HCT116 (cell line): ENCODE measurements at regions of chr11 and their contacts with region 1.

Region 1: GRCh38 chr11:57644748-57645688 is 4.7 kb downstream of the YPEL4 start:
- DNase-seq: peak; percentile 71
- ATAC-seq: peak; percentile 88
- H3K4me3 ChIP-seq: no peak overlapping the region
- H3K27ac ChIP-seq: no peak overlapping the region
- H3K4me1 ChIP-seq: peaks cover 0 to 22% of the 10 kb centered on the region in 2 experiments; a peak in 3 of 4 replicates
- H3K27me3 ChIP-seq: peaks cover 12% of the 10 kb centered on the region; the same call in 1 of the 2 replicates
- CTCF ChIP-seq: peak; percentile 77 to 96 (median 90)
- POLR2A ChIP-seq: no peak
- RAD21 ChIP-seq: peak; percentile 79

Region 2: DNA sequence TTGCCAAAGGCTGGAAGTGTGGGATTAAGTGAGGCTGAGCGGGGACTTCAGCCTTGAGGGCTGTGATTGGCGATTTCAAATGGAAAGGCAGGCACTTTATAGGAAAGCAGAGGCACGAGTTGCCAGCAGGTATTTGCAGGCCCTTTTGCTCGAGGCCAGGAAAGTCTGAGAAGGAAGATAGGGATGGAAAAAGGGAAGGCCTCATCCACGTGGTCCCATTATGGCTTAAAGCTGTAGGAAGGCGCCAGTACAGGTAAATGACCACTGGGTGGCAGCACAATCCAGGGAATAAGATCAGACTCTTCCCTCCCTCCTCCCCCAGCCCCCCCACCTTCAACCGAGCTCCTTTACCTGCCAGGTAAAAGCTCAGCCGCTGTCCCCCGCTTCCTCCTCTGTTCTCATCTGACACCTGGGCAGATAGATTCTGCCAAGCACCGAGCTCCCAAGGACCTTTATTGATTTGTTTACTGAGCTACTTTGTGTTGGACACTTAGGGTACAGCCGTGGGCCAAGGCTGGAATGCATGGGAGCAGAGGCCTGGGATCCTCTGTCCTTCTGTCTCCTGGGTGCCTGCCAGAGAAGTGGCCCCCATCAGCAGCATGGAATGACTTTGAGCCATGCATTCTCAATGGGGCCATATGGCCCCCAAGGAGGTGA is 299.3 kb before region 1 on chr11:
- CTCF ChIA-PET with region 1: interaction called, 33 read pairs
- POLR2A ChIA-PET with region 1: interaction called, 3 read pairs
- RAD21 ChIA-PET with region 1: interaction called, 5 to 6 read pairs
- intact Hi-C with region 1: loop called (anchors 1 kb)
- DNase-seq: peak; percentile 76
- ATAC-seq: peak; percentile 84
- H3K4me3 ChIP-seq: no peak overlapping the region
- H3K27ac ChIP-seq: no peak overlapping the region
- H3K4me1 ChIP-seq: peaks cover 3 to 19% of the 10 kb centered on the region in 2 experiments; a peak in 3 of 4 replicates
- H3K27me3 ChIP-seq: no peaks in the 10 kb centered on the region
- CTCF ChIP-seq: peak; percentile 44 to 69 (median 67); a peak in 5 of 6 replicates
- POLR2A ChIP-seq: no peak
- RAD21 ChIP-seq: peak; percentile 74

Region 3: GRCh38 chr11:57530596-57531507 is 114.2 kb before region 1 on chr11 and contains the start of gene TIMM10:
- CTCF ChIA-PET with region 1: interaction called, 8 read pairs
- POLR2A ChIA-PET with region 1: interaction called, 4 read pairs
- RAD21 ChIA-PET with region 1: no interaction called
- intact Hi-C with region 1: loop called (anchors 1 kb)
- DNase-seq: peak; percentile 99
- ATAC-seq: peak; percentile 95
- H3K4me3 ChIP-seq: peak within 1 kb of the TSS; percentile 64 to 84
- H3K27ac ChIP-seq: peak within 1 kb of the TSS; percentile 61
- H3K4me1 ChIP-seq: peaks cover 16 to 17% of the 10 kb centered on the region in 2 experiments
- H3K27me3 ChIP-seq: no peaks in the 10 kb centered on the region
- CTCF ChIP-seq: no peak
- POLR2A ChIP-seq: peak; percentile 75
- RAD21 ChIP-seq: peak; percentile 16; the same call in 1 of the 2 replicates
- total RNA-seq, gene TIMM10: 65.6 TPM

Region 4: DNA sequence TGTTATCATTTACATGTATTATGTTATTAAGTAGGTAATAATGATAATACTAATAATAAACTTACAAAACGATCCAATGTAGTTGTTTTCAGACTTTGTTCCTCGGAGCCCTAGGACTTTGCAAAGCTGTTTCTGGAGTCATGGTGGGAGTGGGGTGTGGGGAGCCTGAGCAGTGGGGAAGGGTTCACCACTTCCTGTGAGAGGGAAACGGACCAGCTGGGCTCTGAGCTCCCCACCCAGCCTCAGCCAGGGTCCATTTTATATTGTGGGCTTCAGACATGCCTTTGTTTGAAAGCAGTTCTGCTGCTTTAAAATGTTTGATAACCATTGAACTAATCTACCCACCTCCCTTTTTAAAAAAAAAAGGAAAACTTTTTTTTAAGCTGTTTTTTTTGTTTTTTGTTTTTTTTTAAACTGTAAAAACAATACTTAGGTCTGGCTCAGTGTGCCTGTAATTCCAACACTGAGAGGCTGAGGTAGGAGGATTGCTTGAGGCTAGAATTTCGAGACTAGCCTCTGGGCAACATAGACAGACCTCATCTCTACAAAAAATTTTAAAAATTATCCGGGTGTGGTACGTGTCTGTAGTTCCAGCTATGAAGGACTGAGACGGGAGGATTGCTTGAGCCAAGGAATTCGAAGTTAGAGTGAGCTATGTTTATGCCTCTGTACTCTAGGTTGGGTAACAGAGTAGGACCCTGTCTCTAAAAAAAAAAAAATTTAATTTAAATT is 40.6 kb before region 1 on chr11:
- CTCF ChIA-PET with region 1: interaction called, 4 read pairs
- POLR2A ChIA-PET with region 1: no interaction called
- RAD21 ChIA-PET with region 1: no interaction called
- intact Hi-C with region 1: loop called (anchors 1 kb)
- DNase-seq: no peak
- ATAC-seq: no peak
- H3K4me3 ChIP-seq: no peak overlapping the region
- H3K27ac ChIP-seq: no peak overlapping the region
- H3K4me1 ChIP-seq: peaks cover 0 to 4% of the 10 kb centered on the region in 2 experiments; a peak in 2 of 4 replicates
- H3K27me3 ChIP-seq: no peaks in the 10 kb centered on the region
- CTCF ChIP-seq: no peak
- POLR2A ChIP-seq: no peak
- RAD21 ChIP-seq: no peak